Right cardiac atrium (tissue), 5 donors: ENCODE measurements at regions of chr1 and their contacts with region 1.

Region 1: GRCh38 chr1:61049850-61050540 is 32.4 kb upstream of the NFIA start:
- DNase-seq: peak; percentile 93 to 97 (median 97)
- ATAC-seq: peak; percentile 86 to 87
- H3K4me3 ChIP-seq: peak overlapping the region; percentile 94
- H3K27ac ChIP-seq: peak overlapping the region; percentile 85
- H3K4me1 ChIP-seq: peaks cover 6% of the 10 kb centered on the region
- H3K27me3 ChIP-seq: no peaks in the 10 kb centered on the region

Region 2: GRCh38 chr1:59971464-59971911 is 1078.5 kb before region 1 on chr1:
- intact Hi-C with region 1: loop called in 1 of 4 experiments (anchors 10 kb)
- DNase-seq: peak; percentile 65 to 86 (median 83)
- ATAC-seq: peak; percentile 86 to 90
- H3K4me3 ChIP-seq: no peak overlapping the region
- H3K27ac ChIP-seq: no peak overlapping the region
- H3K4me1 ChIP-seq: no peaks in the 10 kb centered on the region
- H3K27me3 ChIP-seq: no peaks in the 10 kb centered on the region

Region 3: GRCh38 chr1:61184040-61184713 is 134.2 kb after region 1 on chr1:
- intact Hi-C with region 1: loop called in 1 of 4 experiments (anchors 5 kb)
- DNase-seq: peak; percentile 95 to 98 (median 97)
- ATAC-seq: peak; percentile 93 to 96
- H3K4me3 ChIP-seq: peak overlapping the region; percentile 72
- H3K27ac ChIP-seq: peak overlapping the region; percentile 97
- H3K4me1 ChIP-seq: peaks cover 15% of the 10 kb centered on the region
- H3K27me3 ChIP-seq: no peaks in the 10 kb centered on the region

Region 4: GRCh38 chr1:61343734-61344420 is 293.9 kb after region 1 on chr1:
- intact Hi-C with region 1: loop called in 3 of 4 experiments (anchors 5 to 10 kb)
- DNase-seq: no peak
- ATAC-seq: peak in 1 of 2 donors; percentile 38
- H3K4me3 ChIP-seq: no peak overlapping the region
- H3K27ac ChIP-seq: peak overlapping the region; percentile 17
- H3K4me1 ChIP-seq: peaks cover 12% of the 10 kb centered on the region
- H3K27me3 ChIP-seq: no peaks in the 10 kb centered on the region

Region 5: DNA sequence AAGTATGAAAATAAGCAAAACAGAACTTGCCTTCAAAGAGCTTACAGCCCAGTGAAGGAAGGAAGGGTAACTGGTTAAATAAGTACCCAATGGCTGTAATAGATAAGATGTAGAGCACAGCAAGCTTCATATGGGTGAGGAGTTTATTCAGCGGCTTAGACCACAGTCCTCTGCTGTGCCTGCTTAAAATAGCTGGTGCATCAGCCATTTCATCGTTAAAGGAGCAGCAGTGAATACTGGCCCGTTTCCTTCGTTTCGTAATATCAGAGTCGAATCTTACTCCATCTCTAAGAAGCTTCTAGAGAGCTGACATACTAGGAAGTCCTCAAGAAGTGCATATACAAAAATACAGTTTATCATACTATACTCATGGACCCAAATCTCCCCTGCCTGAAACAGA is 318.9 kb after region 1 on chr1:
- intact Hi-C with region 1: no loop called
- DNase-seq: no peak
- ATAC-seq: peak; percentile 64 to 76
- H3K4me3 ChIP-seq: no peak overlapping the region
- H3K27ac ChIP-seq: peak overlapping the region; percentile 19
- H3K4me1 ChIP-seq: no peaks in the 10 kb centered on the region
- H3K27me3 ChIP-seq: no peaks in the 10 kb centered on the region

Region 6: DNA sequence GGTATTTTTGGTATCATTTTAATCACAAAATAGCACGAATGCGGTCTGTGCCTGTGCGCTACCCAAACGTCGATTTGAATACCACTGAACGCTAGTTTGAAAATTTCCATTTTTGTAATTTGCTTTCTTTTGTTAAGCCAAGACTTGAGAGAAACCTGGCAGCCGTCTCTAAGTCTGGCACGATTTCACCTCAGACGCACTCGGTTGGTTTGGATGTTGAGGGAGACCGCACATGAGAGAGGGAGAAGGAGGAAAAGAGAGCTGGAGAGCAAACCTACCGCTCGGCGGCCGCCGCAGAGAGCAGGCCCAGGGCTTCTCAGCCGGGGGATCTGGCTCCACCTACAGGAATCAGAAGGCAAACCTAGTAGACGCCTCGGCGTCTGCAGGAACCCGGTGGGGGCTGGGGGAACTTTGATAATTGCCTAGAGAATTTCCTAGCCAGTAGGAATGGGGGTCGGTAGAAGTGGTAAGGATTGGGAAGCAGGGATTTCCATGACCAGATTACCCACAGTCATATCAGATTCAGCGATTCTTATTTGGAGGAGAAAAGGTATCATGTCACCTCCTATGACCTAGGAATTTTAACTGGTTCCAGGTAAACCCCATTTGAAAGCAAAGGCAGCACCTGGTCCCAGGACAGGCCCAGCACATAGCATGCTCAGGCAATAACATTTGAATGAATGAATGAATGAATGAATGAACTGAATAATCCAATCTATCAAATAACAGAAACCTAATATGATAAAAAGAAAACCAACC is 591.8 kb after region 1 on chr1:
- intact Hi-C with region 1: loop called in 2 of 4 experiments (anchors 5 to 10 kb)
- DNase-seq: peak; percentile 85 to 93 (median 92)
- ATAC-seq: peak; percentile 90
- H3K4me3 ChIP-seq: no peak overlapping the region
- H3K27ac ChIP-seq: peak overlapping the region; percentile 80
- H3K4me1 ChIP-seq: peaks cover 2% of the 10 kb centered on the region
- H3K27me3 ChIP-seq: no peaks in the 10 kb centered on the region